GM23248 (cell line): ENCODE measurements at regions of chr5 and their contacts with region 1.

Region 1: GRCh38 chr5:118565335-118565971 is 422.9 kb downstream of the DTWD2 start:
- DNase-seq: no peak
- H3K4me3 ChIP-seq: no peak overlapping the region
- H3K27ac ChIP-seq: no peak overlapping the region
- H3K4me1 ChIP-seq: no peaks in the 10 kb centered on the region
- H3K27me3 ChIP-seq: no peaks in the 10 kb centered on the region

Region 2: DNA sequence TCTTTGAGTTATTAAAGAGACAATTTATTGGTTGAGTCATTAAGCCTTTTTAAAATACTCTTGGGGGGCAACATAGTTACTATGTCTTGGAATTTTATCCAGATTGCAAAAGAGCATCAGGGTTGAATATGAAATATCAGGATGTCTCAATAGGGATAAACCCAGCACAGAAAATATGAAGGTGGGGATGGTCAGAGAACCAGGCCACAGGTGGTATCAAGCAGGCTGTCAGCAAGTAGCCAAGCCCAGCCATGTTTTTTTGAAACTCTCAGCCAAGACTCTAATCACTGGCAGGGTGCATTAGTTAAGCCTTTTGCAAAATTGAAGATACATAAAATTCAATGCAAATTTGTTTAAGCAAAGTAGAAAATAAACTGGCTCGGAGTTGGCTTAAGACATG is 46.0 kb before region 1 on chr5:
- in situ Hi-C with region 1: loop called (anchors 5 kb)
- DNase-seq: no peak
- H3K4me3 ChIP-seq: no peak overlapping the region
- H3K27ac ChIP-seq: no peak overlapping the region
- H3K4me1 ChIP-seq: no peaks in the 10 kb centered on the region
- H3K27me3 ChIP-seq: no peaks in the 10 kb centered on the region